ENCODE measurements at regions of chr1 and their contacts with region 1.

Region 1: DNA sequence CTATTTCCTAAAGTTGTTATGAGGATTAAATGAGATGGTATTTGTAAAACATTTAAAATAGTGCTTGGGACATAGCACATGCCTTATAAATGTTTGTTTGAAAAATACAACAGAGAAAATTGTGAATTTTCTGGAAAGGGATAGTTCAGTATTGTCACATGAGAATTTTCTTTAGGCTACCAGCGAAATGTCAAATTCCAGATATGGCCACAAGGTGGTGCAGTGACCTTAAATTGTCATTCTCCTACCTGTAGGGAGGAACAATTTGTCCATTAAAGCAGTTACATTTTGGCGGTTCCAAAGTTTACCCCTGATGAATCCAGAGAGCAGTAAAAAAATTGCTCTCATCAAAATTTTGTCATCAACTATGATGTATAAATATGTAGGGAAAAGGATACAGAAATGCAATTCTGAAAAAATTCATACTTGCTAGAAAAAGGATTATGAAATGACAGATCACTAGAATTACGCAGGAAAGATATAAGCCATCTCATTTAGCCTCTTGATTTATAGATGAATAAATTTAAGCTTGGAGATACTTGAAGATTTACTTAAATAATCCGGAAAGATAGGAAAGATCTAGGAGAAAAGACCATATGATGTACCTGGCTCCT is 50.2 kb upstream of the TSHB start:
- DNase-seq: peak in 1 of 2 donors; percentile 66
- H3K4me3 ChIP-seq: no peak overlapping the region
- H3K27ac ChIP-seq: no peak overlapping the region
- H3K4me1 ChIP-seq: no peaks in the 10 kb centered on the region
- H3K27me3 ChIP-seq: no peaks in the 10 kb centered on the region
- CTCF ChIP-seq: peak; percentile 81 to 93

Region 2: DNA sequence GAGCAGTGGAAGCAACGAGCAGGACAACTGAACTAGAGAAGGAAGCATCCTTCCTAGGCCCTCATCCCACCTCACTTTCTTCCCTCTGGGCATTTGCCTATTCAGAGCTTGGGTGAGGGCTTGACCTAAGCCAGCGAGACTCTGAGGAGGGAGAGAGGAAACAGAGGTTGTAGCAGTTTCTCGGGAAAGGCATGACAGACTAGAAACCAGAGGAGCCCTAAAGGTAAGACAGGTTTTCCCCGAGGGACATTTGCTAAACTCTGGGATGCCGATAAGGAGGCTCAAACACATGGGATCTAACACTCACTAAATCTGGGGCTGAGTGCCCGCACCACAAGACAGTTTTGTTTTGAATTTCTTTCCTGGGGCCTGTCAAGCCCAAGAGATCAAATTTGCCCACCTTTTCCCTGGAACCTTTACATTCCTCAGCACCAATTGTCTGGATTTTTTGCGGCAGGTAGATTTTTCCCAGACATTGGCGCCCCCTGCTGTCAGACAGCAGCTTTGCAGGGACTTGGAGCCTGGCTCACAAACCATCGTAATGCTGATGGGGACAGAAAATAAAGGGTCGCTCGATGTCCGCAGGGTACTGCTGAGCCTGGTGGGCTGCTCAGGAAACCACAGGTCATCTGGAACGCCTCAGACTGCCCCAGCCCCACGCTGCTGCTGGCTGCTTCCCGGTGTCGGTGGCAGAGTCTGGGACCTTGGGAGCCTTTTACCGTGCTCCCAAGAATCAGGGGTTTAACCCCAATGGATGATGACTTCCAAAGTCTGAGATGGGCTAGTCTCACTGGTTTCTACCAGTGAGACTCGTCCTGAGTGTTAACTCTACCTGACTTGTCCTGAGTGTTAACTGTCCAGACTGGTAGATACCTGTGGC is 133.4 kb after region 1 on chr1:
- intact Hi-C with region 1: loop called (anchors 2 kb)
- DNase-seq: no peak
- H3K4me3 ChIP-seq: no peak overlapping the region
- H3K27ac ChIP-seq: peak overlapping the region; percentile 65 to 67
- H3K4me1 ChIP-seq: peaks cover 0 to 45% (median 10%) of the 10 kb centered on the region in 4 donors
- H3K27me3 ChIP-seq: no peaks in the 10 kb centered on the region
- CTCF ChIP-seq: peak; percentile 94